Esophagus muscularis mucosa (tissue), 4 donors: ENCODE measurements at regions of chr1 and their contacts with region 1.

Region 1: DNA sequence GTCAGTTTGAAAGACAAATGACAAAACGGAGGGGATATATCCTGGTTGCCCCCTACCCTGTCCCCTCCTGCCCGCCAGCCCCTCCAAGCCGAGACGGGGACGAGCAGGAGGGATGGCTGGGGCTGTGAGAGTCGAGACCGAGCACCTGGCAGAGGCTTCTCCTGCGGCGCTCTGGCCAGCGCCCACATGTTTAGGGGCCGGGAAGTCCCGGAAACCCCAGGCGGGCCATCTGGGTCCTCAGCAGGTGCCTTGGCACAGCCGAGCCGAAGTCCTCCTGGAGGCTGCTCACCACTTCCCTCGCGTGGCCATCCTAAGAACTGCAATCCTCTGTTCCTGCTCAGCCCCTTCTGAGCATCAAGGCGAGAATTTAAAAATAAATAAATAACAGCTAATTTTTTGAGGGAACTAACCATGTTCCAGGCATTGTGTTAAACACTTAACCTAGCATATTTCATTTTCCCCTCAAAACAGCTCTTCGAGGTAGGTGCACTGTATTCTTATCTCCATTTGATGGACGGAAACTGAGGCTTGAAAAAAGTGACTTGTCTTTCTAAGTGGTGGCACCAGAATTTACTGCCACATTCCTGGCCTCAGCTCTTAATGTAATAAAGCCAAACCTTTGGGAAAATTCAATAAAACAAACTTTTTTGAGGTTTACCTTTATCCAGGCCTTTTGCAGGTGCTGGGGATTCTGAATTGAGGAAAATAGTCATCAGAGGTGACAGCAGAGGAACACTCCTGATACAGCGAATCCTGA is 3.5 kb upstream of the RIMS3 start:
- DNase-seq: no peak
- H3K4me3 ChIP-seq: peak overlapping the region; percentile 17 to 48 (median 31)
- H3K27ac ChIP-seq: no peak overlapping the region
- H3K4me1 ChIP-seq: peaks cover 11 to 37% (median 33%) of the 10 kb centered on the region in 4 donors
- H3K27me3 ChIP-seq: no peaks in the 10 kb centered on the region
- CTCF ChIP-seq: peak; percentile 91 to 99 (median 94)
- EP300 ChIP-seq: no peak
- POLR2A ChIP-seq: no peak

Region 2: DNA sequence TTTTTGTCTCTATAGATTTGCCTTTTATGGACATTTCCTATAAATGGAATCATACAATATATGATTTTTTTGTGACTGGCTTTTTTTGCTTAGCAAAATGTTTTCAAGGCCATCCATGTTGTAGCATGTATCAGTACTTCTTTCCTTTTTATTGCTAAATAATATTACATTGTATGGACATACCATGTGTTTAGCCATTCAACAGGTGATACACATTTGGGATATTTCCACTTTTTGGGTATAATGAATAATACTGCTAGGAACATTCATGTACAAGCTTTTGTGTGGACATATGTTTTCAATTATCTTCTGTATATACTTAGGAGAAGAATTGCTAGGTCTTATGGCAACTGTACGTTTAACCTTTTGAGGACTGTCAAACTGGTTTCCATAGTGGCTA is 50.8 kb before region 1 on chr1:
- intact Hi-C with region 1: loop called (anchors 5 kb)
- DNase-seq: no peak
- H3K4me3 ChIP-seq: no peak overlapping the region
- H3K27ac ChIP-seq: no peak overlapping the region
- H3K4me1 ChIP-seq: no peaks in the 10 kb centered on the region
- H3K27me3 ChIP-seq: peaks cover 0 to 4% (median 0%) of the 10 kb centered on the region in 4 donors
- CTCF ChIP-seq: no peak
- EP300 ChIP-seq: no peak
- POLR2A ChIP-seq: no peak

Region 3: DNA sequence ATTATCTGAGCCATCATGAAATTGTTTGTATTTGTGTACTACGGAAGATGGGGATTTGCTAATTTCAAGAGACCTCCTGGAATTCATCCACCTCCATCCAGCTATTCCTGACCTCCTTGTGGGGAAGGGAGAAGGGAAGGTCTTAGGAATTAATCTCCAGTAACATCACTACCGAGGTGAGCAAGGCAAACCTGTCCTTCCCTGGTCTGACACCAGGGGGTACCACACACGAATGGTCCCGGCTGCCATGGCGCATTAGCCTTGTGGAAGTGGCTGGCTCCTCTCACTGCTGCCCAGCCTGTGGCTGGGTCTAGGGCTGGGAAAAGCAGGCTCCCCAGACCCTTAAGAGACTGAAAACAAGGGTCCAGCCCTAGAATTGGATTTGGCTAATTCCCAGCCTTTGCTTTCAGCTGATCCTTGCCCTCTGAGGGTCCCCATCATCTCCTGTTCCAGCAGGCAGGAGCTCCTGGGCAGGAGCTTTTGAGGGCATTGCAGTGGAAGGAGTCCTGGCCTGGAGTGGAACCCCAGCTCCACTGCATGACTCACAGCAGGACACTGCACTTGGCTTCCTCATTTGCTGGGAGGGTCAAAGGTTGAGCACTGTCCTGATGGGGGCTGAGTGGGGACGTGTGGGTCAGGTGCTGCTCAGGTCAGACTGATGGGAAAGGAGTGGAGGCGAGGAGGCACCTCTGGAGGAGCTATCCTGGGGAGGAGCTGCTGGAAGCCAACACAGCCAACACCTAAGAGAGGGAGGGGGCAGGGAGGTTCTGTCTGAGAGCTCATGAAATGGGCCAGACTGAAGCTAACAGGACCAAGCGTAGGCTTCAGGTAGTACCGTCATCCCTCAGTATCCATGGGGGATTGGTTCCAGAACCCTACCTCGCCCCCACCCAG is 38.2 kb before region 1 on chr1:
- intact Hi-C with region 1: no loop called
- DNase-seq: no peak
- H3K4me3 ChIP-seq: no peak overlapping the region
- H3K27ac ChIP-seq: no peak overlapping the region
- H3K4me1 ChIP-seq: peaks cover 0 to 10% (median 6%) of the 10 kb centered on the region in 4 donors
- H3K27me3 ChIP-seq: no peaks in the 10 kb centered on the region
- CTCF ChIP-seq: peak; percentile 40 to 55 (median 52)
- EP300 ChIP-seq: no peak
- POLR2A ChIP-seq: no peak

Region 4: DNA sequence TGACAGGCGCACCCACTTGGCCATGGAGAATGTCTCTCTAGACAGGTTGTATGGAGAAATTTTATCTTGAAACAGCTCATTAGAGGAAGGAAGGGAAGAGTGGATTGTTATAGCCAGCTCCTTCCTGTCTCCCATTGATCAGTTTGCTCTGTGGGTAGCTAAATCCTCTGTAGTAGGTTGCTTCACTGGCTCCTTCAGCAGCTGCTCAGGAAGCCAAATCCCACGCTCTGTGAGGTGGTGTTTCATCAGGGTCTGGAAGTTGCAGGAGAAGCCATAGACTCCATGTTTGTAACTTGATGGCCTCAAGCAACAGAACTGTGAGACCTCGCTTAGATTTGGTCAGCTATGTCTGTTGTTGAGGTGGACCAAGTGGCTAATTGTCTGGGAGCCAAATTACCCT is 15.7 kb after region 1 on chr1:
- intact Hi-C with region 1: loop called (anchors 2 kb)
- DNase-seq: no peak
- H3K4me3 ChIP-seq: no peak overlapping the region
- H3K27ac ChIP-seq: no peak overlapping the region
- H3K4me1 ChIP-seq: peaks cover 0 to 4% (median 1%) of the 10 kb centered on the region in 4 donors
- H3K27me3 ChIP-seq: no peaks in the 10 kb centered on the region
- CTCF ChIP-seq: no peak
- EP300 ChIP-seq: no peak
- POLR2A ChIP-seq: no peak